ENCODE measurements at regions of chr2 and their contacts with region 1.

Region 1: GRCh38 chr2:240704651-240705050 is 13.0 kb downstream of the AQP12A start:
- DNase-seq: no peak
- CTCF ChIP-seq: no peak

Region 2: DNA sequence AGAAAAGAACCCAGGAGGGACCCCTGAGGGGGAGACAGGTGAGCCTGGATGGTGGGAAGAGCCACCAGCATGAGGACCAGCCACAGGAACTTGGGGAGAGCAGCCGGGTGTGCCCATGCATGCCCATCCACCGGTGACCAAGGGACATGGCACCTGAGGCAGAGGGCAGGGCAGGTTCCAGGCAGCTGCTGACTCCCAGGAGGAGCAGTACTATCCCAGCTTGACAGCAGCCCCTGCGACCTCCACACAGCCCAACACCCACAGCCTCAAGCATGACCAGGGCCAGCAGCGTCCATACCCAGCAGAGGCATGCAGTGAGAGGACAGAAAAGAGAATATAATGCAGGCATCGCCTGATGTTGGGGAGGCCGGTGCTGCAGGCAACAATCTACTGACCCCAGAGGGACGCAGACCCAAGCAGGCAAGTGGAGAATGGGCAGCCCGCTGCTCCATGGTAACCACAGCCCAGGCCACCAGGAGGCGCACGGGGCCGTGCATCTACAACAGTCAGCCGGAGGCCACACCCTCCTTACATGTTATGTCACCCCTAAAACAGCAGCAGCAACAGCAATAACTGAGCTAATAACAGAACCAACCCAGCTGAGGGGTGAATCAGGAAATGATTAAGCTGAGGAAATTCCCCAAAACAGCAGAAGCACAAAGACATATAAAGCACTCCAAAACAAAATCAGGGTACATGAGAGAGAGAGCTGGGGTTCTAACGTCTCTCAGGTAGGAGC is 190.9 kb before region 1 on chr2:
- in situ Hi-C with region 1: loop called (anchors 25 kb)
- DNase-seq: peak; percentile 96
- CTCF ChIP-seq: peak; percentile 93

Measured in GM13976 (cell line).